GM12878 (cell line): ENCODE measurements at regions of chr6 and their contacts with region 1.

Region 1: GRCh38 chr6:82247634-82248232 is at the start of gene IBTK:
- DNase-seq: peak; percentile 69
- ATAC-seq: peak; percentile 89
- H3K4me3 ChIP-seq: peak within 1 kb of the TSS; percentile 76
- H3K27ac ChIP-seq: peak within 1 kb of the TSS; percentile 76
- H3K4me1 ChIP-seq: peaks cover 6% of the 10 kb centered on the region; the same call in 1 of the 2 replicates
- H3K27me3 ChIP-seq: no peaks in the 10 kb centered on the region
- CTCF ChIP-seq: no peak
- EP300 ChIP-seq: no peak
- POLR2A ChIP-seq: peak; percentile 77
- RAD21 ChIP-seq: no peak
- polyA plus RNA-seq, gene IBTK: 12.0 to 16.6 TPM

Region 2: GRCh38 chr6:82185948-82186535 is 61.7 kb before region 1 on chr6:
- CTCF ChIA-PET with region 1: no interaction called
- POLR2A ChIA-PET with region 1: no interaction called
- RAD21 ChIA-PET with region 1: no interaction called
- SMC1A ChIA-PET with region 1: no interaction called
- in situ Hi-C with region 1: no loop called
- intact Hi-C with region 1: no loop called
- DNase-seq: no peak
- ATAC-seq: no peak
- H3K4me3 ChIP-seq: no peak overlapping the region
- H3K27ac ChIP-seq: no peak overlapping the region
- H3K4me1 ChIP-seq: no peaks in the 10 kb centered on the region
- H3K27me3 ChIP-seq: no peaks in the 10 kb centered on the region
- CTCF ChIP-seq: no peak
- EP300 ChIP-seq: no peak
- POLR2A ChIP-seq: no peak
- RAD21 ChIP-seq: no peak

Region 3: DNA sequence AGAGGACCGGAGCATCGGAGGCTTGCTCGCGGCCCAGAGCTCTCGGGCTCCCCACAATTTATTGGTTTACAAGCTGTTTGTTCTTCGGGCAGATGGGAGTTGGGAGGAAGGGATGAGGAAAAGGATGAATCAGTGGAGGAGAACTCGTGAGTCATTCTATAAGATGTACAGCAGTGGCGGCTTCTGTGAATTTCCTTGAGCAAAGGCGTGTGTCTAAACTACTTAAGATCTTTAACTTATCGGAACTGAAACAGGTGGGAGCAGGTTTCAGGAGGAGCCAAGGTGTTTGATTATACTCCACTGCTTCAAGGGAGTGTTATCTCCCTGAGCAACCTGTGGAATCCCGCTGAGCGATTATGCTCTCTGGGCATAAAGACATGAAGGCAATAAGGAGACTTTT is 50.3 kb after region 1 on chr6:
- CTCF ChIA-PET with region 1: no interaction called
- POLR2A ChIA-PET with region 1: no interaction called
- RAD21 ChIA-PET with region 1: no interaction called
- SMC1A ChIA-PET with region 1: no interaction called
- in situ Hi-C with region 1: no loop called
- intact Hi-C with region 1: no loop called
- DNase-seq: no peak
- ATAC-seq: no peak
- H3K4me3 ChIP-seq: no peak overlapping the region
- H3K27ac ChIP-seq: no peak overlapping the region
- H3K4me1 ChIP-seq: no peaks in the 10 kb centered on the region
- H3K27me3 ChIP-seq: no peaks in the 10 kb centered on the region
- CTCF ChIP-seq: no peak
- EP300 ChIP-seq: no peak
- POLR2A ChIP-seq: no peak
- RAD21 ChIP-seq: no peak

Region 4: GRCh38 chr6:82385961-82386360 is 138.2 kb after region 1 on chr6:
- CTCF ChIA-PET with region 1: no interaction called
- POLR2A ChIA-PET with region 1: no interaction called
- RAD21 ChIA-PET with region 1: no interaction called
- SMC1A ChIA-PET with region 1: no interaction called
- in situ Hi-C with region 1: no loop called
- intact Hi-C with region 1: no loop called
- DNase-seq: no peak
- ATAC-seq: peak; percentile 27
- H3K4me3 ChIP-seq: no peak overlapping the region
- H3K27ac ChIP-seq: no peak overlapping the region
- H3K4me1 ChIP-seq: peaks cover 21% of the 10 kb centered on the region
- H3K27me3 ChIP-seq: no peaks in the 10 kb centered on the region
- CTCF ChIP-seq: no peak
- EP300 ChIP-seq: no peak
- POLR2A ChIP-seq: no peak
- RAD21 ChIP-seq: no peak

Region 5: DNA sequence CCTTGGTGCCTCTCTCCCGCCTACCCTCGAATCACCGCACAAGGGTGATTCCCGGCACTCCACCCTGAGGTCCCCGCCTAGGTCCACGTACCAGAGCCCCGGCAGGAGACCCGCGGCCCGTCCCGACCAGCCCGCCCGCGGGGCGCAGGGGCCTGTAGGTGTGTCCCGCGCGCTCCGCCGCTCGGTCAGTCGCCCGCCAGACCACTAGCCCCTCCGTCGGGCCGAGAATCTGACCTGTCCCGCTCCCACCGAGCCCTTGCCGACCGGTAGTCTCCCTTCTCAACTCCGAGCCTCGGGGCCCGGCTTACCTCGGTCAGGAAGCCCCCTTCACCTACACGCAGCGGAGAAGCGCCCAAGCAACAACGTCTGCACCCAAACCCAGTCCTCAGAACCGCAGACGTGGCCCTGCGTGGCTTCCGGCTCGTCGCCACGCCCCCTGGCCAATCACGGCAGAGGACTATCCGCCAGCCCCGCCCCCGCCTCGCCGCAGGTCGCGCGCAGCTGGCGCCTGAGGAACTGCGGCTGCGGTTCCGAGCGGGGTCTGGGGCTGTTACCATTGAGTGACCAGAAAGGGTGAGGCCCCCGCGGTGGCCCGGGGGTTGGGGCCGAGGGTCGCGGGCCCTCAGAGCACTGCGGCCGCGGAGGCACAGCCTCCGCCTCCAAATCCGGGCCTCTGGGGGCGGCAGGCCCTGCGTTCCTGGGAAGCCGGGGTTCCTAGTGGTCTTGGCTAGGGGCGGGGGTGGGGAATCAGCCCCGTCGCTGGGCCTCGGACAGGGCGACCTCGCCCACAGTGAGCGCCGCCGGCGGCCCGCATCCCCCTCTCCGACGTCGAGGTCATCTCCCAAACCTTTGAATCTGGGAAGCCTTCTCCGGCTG is 945.4 kb after region 1 on chr6 and contains the starts of genes PGM3 and RWDD2A:
- CTCF ChIA-PET with region 1: no interaction called
- POLR2A ChIA-PET with region 1: no interaction called
- RAD21 ChIA-PET with region 1: no interaction called
- SMC1A ChIA-PET with region 1: no interaction called
- in situ Hi-C with region 1: no loop called
- intact Hi-C with region 1: loop called (anchors 10 kb)
- DNase-seq: peak; percentile 56
- ATAC-seq: peak; percentile 97
- H3K4me3 ChIP-seq: peak within 1 kb of the TSS; percentile 79
- H3K27ac ChIP-seq: peak within 1 kb of the TSS; percentile 89
- H3K4me1 ChIP-seq: peaks cover 5% of the 10 kb centered on the region
- H3K27me3 ChIP-seq: no peaks in the 10 kb centered on the region
- CTCF ChIP-seq: no peak
- EP300 ChIP-seq: no peak
- POLR2A ChIP-seq: peak; percentile 96
- RAD21 ChIP-seq: no peak
- polyA plus RNA-seq, gene PGM3: 23.1 to 28.6 TPM
- polyA plus RNA-seq, gene RWDD2A: 3.2 to 3.4 TPM

Region 6: GRCh38 chr6:83199863-83200225 is 952.1 kb after region 1 on chr6:
- CTCF ChIA-PET with region 1: no interaction called
- POLR2A ChIA-PET with region 1: no interaction called
- RAD21 ChIA-PET with region 1: no interaction called
- SMC1A ChIA-PET with region 1: no interaction called
- in situ Hi-C with region 1: loop called (anchors 10 kb)
- intact Hi-C with region 1: loop called (anchors 10 kb)
- DNase-seq: no peak
- ATAC-seq: no peak
- H3K4me3 ChIP-seq: no peak overlapping the region
- H3K27ac ChIP-seq: no peak overlapping the region
- H3K4me1 ChIP-seq: no peaks in the 10 kb centered on the region; the same call in 1 of the 2 replicates
- H3K27me3 ChIP-seq: no peaks in the 10 kb centered on the region
- CTCF ChIP-seq: no peak
- EP300 ChIP-seq: no peak
- POLR2A ChIP-seq: no peak
- RAD21 ChIP-seq: no peak